Gastrocnemius medialis (tissue), 4 donors: ENCODE measurements at regions of chr1 and their contacts with region 1.

Region 1: GRCh38 chr1:48109390-48110013 is 112.3 kb upstream of the TRABD2B start:
- DNase-seq: no peak
- ATAC-seq: no peak
- H3K4me3 ChIP-seq: no peak overlapping the region
- H3K27ac ChIP-seq: no peak overlapping the region
- H3K4me1 ChIP-seq: no peaks in the 10 kb centered on the region
- H3K27me3 ChIP-seq: no peaks in the 10 kb centered on the region
- CTCF ChIP-seq: peak; percentile 43 to 76 (median 52)
- POLR2A ChIP-seq: no peak

Region 2: DNA sequence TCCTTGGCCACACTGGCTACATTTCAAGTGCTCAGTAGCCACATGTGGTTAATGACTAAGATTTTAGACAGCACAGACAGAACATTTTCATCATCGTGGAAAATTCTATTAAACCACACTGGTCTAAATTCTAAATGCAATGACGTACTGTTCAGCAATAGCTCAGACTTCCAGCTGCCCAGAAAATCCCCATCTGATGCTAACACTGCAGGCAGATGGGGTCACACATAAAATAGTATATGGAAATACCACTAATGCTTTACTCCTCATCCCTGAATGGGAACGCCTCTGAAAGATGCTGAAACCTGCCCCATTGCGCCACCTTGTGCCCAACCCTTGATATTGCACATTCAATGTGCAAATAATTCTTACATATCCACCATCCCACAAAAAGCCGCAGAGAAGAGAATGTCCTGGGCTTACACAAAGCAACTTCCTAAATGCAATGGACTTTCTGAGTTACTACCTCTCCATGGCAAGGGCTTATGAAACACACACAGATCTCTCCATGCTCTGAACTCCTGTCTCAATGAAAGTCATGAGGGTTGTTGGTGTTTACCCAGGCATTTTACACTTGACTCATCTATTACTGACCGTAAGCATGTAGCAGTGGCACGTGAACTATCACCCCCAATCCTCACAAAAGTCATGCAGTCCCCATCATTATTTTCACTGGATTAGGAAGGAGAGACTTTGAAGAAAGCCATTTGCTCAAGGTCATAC is 92.7 kb after region 1 on chr1:
- in situ Hi-C with region 1: loop called in 2 of 4 experiments (anchors 5 to 10 kb)
- intact Hi-C with region 1: loop called (anchors 2 kb)
- DNase-seq: peak; percentile 11 to 27
- ATAC-seq: peak; percentile 49 to 60
- H3K4me3 ChIP-seq: no peak overlapping the region
- H3K27ac ChIP-seq: no peak overlapping the region
- H3K4me1 ChIP-seq: no peaks in the 10 kb centered on the region
- H3K27me3 ChIP-seq: no peaks in the 10 kb centered on the region
- CTCF ChIP-seq: peak; percentile 38 to 78 (median 62)
- POLR2A ChIP-seq: no peak

Region 3: DNA sequence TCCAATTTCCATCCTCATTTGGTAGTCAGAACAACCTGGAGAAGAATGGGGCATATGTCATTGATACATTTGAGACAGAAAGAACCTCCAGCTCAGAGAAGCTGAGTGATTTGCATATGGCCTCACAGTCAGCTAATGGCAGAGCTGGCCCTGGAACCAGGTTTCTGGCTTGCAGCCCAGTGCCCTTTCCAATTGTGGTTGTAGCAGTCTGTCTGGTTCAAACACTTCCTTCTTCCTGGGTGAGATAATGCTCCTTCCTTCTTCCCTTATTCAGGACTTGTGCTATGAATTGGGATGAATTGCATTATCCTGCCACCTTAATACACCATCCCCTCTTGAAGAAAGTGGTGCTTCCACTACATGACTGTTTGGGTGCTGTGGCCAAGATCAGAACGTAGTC is 137.2 kb after region 1 on chr1:
- in situ Hi-C with region 1: no loop called
- intact Hi-C with region 1: no loop called
- DNase-seq: peak in 1 of 2 donors; percentile 29
- ATAC-seq: no peak
- H3K4me3 ChIP-seq: no peak overlapping the region
- H3K27ac ChIP-seq: no peak overlapping the region
- H3K4me1 ChIP-seq: no peaks in the 10 kb centered on the region
- H3K27me3 ChIP-seq: no peaks in the 10 kb centered on the region
- CTCF ChIP-seq: no peak
- POLR2A ChIP-seq: no peak

Region 4: GRCh38 chr1:48498096-48498791 is 388.7 kb after region 1 on chr1:
- in situ Hi-C with region 1: loop called (anchors 10 to 25 kb)
- intact Hi-C with region 1: no loop called
- DNase-seq: peak; percentile 53 to 59
- ATAC-seq: peak; percentile 73 to 91
- H3K4me3 ChIP-seq: no peak overlapping the region
- H3K27ac ChIP-seq: no peak overlapping the region
- H3K4me1 ChIP-seq: no peaks in the 10 kb centered on the region
- H3K27me3 ChIP-seq: no peaks in the 10 kb centered on the region
- CTCF ChIP-seq: peak; percentile 57 to 91 (median 77)
- POLR2A ChIP-seq: no peak

Region 5: DNA sequence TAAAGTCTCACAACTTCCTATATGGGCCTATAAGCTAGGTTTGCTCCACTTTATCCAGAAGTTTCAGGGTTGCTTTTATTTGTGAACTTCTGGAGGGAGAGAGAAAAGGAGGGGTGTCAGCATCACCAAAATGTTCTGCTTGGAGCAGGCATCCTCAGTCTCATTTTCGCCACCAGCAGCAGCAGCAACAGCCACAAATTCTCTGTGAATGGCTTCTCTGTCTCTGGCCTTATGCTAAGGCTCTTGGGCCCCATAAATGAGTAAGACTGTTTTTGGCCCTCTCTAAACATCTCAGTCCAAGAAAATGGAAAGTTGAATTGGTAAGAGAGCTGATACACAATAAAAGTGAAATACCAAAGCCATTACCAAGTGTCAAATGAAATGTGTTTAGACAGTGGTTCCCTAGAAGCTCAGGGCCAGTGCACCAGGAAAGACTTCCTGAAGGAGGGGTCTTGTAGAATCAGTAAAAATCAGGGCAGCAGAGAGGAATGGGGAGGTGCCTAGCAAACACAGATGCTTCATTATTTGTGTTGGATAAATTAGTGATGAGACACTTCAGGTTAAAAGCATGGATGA is 415.5 kb after region 1 on chr1:
- in situ Hi-C with region 1: loop called in 1 of 4 experiments (anchors 25 kb)
- intact Hi-C with region 1: no loop called
- DNase-seq: no peak
- ATAC-seq: no peak
- H3K4me3 ChIP-seq: no peak overlapping the region
- H3K27ac ChIP-seq: no peak overlapping the region
- H3K4me1 ChIP-seq: peaks cover 0 to 4% of the 10 kb centered on the region in 2 donors
- H3K27me3 ChIP-seq: peaks cover 0 to 7% (median 4%) of the 10 kb centered on the region in 3 donors
- CTCF ChIP-seq: no peak
- POLR2A ChIP-seq: no peak